Activated T-helper 1 cell treated with anti-CD3 and anti-CD28 coated beads, Interleukin-12 subunit alpha, Interleukin-12 subunit beta, Interleukin-2, Interleukin-4 antibody, amounts not matched to agents 30 ng/mL and 10 ng/mL and 1 ng/mL, durations not matched to agents 14 hours and 24 hours and 36 hours (primary cell): ENCODE measurements at regions of chr3 and their contacts with region 1.

Region 1: DNA sequence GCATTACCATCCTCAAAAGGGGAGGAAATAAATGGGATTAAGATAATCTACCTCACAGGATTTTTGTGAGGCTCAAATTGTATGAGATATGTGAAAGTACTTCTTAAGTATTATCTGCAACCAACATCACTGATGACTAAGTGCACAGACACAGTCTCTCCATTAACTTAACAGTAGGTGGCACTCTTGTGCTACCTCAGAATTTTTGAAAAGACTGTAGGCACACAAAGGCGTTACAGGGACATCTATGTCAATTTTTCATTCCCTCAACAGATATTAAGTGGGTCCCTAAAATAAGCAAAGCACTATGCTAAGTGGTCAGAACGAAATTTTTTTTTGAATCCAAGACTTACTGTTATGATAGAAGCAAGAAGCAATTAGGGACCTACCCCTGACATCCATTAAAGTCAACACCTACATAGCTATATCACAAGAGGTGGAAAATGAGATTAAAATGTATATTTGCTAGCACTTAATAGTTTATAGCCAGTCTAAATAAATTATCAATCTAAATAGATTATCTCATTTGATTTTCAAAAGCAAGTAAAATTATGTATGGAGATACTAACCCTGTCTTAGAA is 52.9 kb downstream of the RYK start:
- DNase-seq: no peak
- H3K4me3 Mint-ChIP-seq: no peak overlapping the region
- H3K27ac Mint-ChIP-seq: no peak overlapping the region
- H3K4me1 Mint-ChIP-seq: peaks cover 6% of the 10 kb centered on the region
- H3K27me3 Mint-ChIP-seq: no peaks in the 10 kb centered on the region

Region 2: GRCh38 chr3:133443649-133444422 is 753.9 kb before region 1 on chr3:
- intact Hi-C with region 1: no loop called
- DNase-seq: no peak
- H3K4me3 Mint-ChIP-seq: no peak overlapping the region
- H3K27ac Mint-ChIP-seq: no peak overlapping the region
- H3K4me1 Mint-ChIP-seq: peaks cover 43% of the 10 kb centered on the region
- H3K27me3 Mint-ChIP-seq: no peaks in the 10 kb centered on the region

Region 3: GRCh38 chr3:134094491-134094890 is 103.3 kb before region 1 on chr3:
- intact Hi-C with region 1: no loop called
- DNase-seq: no peak
- H3K4me3 Mint-ChIP-seq: no peak overlapping the region
- H3K27ac Mint-ChIP-seq: no peak overlapping the region
- H3K4me1 Mint-ChIP-seq: no peaks in the 10 kb centered on the region
- H3K27me3 Mint-ChIP-seq: no peaks in the 10 kb centered on the region

Region 4: GRCh38 chr3:134228035-134228434 is 30.3 kb after region 1 on chr3:
- intact Hi-C with region 1: loop called (anchors 2 kb)
- DNase-seq: no peak
- H3K4me3 Mint-ChIP-seq: no peak overlapping the region
- H3K27ac Mint-ChIP-seq: no peak overlapping the region
- H3K4me1 Mint-ChIP-seq: peaks cover 8% of the 10 kb centered on the region
- H3K27me3 Mint-ChIP-seq: peaks cover 12% of the 10 kb centered on the region